ENCODE measurements at regions of chr15 and their contacts with region 1.

Region 1: DNA sequence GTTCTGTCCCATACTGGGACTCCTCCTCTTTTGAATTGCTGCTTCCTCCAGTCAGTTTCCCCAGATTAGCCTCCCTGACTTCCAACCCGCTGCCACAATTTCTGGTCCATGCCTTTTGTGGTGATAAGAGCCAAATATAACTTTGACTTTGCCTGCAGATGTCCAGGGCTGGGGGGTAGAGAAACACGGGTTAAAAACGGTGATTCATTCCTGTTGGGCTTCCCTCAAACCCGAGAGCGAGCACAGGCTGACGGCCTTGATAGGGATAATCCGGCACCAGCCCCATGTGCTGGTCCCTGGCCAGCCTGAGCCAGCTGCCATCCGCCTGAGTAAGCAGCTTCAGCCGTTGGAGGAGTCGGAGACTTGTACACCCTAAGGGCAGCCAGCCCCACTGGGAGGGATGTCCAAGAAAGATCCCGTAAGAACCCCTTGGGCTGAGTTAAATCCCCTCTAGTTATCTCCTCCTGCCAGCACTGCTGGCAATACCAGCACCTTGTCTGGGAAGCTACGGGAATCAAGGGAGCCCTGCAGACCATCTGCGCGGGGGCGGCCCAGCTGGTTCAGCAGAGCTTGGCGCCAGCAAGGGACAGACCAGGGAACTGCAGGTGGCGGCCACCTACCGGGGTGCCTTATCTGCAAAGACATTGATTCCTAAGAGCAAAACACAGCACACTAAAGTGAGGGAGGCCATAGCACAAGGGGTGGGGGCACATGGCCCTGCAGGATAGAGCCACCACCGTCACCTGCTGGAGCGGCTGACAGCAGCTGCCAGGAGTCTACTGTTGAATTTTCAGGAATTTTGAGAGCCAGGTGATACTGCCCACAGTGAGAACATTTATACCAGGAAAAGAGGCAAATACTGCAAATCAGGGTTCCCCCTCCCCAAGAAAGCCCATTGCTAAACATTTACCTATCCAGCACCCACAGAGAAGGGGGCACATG is 18.1 kb downstream of the CSPG4 start:
- DNase-seq: peak; percentile 99
- ATAC-seq: peak; percentile 98
- H3K4me3 ChIP-seq: no peak overlapping the region
- H3K27ac ChIP-seq: peak overlapping the region; percentile 91
- H3K4me1 ChIP-seq: peaks cover 25% of the 10 kb centered on the region
- H3K27me3 ChIP-seq: no peaks in the 10 kb centered on the region
- CTCF ChIP-seq: peak; percentile 36
- POLR2A ChIP-seq: peak; percentile 21; the same call in 1 of the 2 replicates
- RAD21 ChIP-seq: peak; percentile 30

Region 2: GRCh38 chr15:75732809-75733451 is 38.4 kb after region 1 on chr15:
- CTCF ChIA-PET with region 1: no interaction called
- POLR2A ChIA-PET with region 1: no interaction called
- dilution Hi-C with region 1: no loop called
- in situ Hi-C with region 1: loop called (anchors 5 kb)
- intact Hi-C with region 1: loop called (anchors 2 kb)
- DNase-seq: peak; percentile 65
- ATAC-seq: peak; percentile 94
- H3K4me3 ChIP-seq: no peak overlapping the region
- H3K27ac ChIP-seq: no peak overlapping the region
- H3K4me1 ChIP-seq: peaks cover 10% of the 10 kb centered on the region
- H3K27me3 ChIP-seq: no peaks in the 10 kb centered on the region
- CTCF ChIP-seq: peak; percentile 79
- POLR2A ChIP-seq: no peak
- RAD21 ChIP-seq: peak; percentile 80

Region 3: GRCh38 chr15:75759416-75760130 is 65.1 kb after region 1 on chr15:
- CTCF ChIA-PET with region 1: no interaction called
- POLR2A ChIA-PET with region 1: no interaction called
- dilution Hi-C with region 1: no loop called
- in situ Hi-C with region 1: no loop called
- intact Hi-C with region 1: no loop called
- DNase-seq: no peak
- ATAC-seq: no peak
- H3K4me3 ChIP-seq: no peak overlapping the region
- H3K27ac ChIP-seq: no peak overlapping the region
- H3K4me1 ChIP-seq: peaks cover 2% of the 10 kb centered on the region
- H3K27me3 ChIP-seq: no peaks in the 10 kb centered on the region; the same call in 1 of the 2 replicates
- CTCF ChIP-seq: no peak
- POLR2A ChIP-seq: no peak
- RAD21 ChIP-seq: no peak